ENCODE measurements at regions of chr6 and their contacts with region 1.

Region 1: GRCh38 chr6:143700684-143701348 is 23.1 kb downstream of the PHACTR2 start:
- DNase-seq: no peak
- H3K4me3 ChIP-seq: no peak overlapping the region
- H3K27ac ChIP-seq: peak overlapping the region in 1 of 2 donors; percentile 38
- H3K4me1 ChIP-seq: peaks cover 4% of the 10 kb centered on the region
- H3K27me3 ChIP-seq: no peaks in the 10 kb centered on the region
- CTCF ChIP-seq: no peak
- POLR2A ChIP-seq: no peak

Region 2: DNA sequence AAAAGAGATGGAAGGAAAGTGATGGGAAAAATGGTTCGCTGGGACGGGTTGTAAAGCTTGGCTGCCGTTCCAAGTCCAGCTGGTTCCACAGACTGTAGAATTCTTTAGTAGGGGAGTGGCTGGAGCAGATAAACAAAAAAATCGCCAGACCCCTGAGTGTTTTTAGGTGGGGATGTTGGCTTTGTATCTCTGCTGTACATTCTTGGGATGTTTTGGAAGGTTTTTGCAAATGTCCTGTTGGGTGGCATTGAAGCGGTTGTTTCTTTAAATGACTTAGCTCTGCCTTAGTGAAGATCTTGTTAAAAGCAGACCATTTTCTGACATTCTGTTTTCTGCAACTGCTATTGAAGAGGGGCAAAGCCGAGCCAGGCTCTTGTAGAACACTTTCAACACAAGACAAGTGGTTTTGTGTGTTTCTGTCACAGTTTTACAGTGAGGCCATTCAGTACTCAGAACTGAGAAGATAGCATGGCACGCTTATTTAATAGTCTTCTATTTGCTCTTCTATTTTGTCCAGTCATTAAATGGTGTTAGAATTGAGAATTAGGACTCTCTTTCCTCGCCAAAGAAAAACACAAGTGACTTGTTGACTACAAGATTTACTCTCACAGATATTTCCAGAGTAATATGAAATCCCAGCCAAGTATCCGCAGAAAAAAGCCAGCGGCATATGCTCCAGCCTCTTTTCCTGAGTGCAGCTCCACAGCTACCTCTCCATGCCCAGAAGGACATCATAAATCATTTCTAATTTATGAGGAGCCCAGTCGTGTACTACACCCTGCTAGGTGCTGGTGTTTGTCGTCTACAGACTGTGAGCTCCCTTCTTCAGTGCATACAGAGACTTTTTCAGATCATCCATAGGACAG is 42.7 kb after region 1 on chr6:
- intact Hi-C with region 1: loop called (anchors 5 kb)
- DNase-seq: peak; percentile 46
- H3K4me3 ChIP-seq: no peak overlapping the region
- H3K27ac ChIP-seq: peak overlapping the region; percentile 67 to 74
- H3K4me1 ChIP-seq: peaks cover 14% of the 10 kb centered on the region
- H3K27me3 ChIP-seq: no peaks in the 10 kb centered on the region
- CTCF ChIP-seq: no peak
- POLR2A ChIP-seq: no peak

Measured in prostate gland (tissue), 2 donors.